Prostate gland (tissue), 2 donors: ENCODE measurements at regions of chr10 and their contacts with region 1.

Region 1: GRCh38 chr10:79929409-79929904 is 19.4 kb downstream of the SFTPD start:
- DNase-seq: peak; percentile 72
- H3K4me3 ChIP-seq: no peak overlapping the region
- H3K27ac ChIP-seq: no peak overlapping the region
- H3K4me1 ChIP-seq: peaks cover 5% of the 10 kb centered on the region
- H3K27me3 ChIP-seq: no peaks in the 10 kb centered on the region
- CTCF ChIP-seq: peak; percentile 75 to 91 (median 87)
- POLR2A ChIP-seq: no peak

Region 2: GRCh38 chr10:79562135-79562756 is 367.2 kb before region 1 on chr10:
- intact Hi-C with region 1: loop called (anchors 2 kb)
- DNase-seq: peak; percentile 60
- H3K4me3 ChIP-seq: no peak overlapping the region
- H3K27ac ChIP-seq: no peak overlapping the region
- H3K4me1 ChIP-seq: peaks cover 2% of the 10 kb centered on the region
- H3K27me3 ChIP-seq: no peaks in the 10 kb centered on the region
- CTCF ChIP-seq: peak; percentile 45 to 76 (median 58)
- POLR2A ChIP-seq: no peak

Region 3: GRCh38 chr10:80136081-80136571 is 206.7 kb after region 1 on chr10:
- intact Hi-C with region 1: no loop called
- DNase-seq: no peak
- H3K4me3 ChIP-seq: no peak overlapping the region
- H3K27ac ChIP-seq: no peak overlapping the region
- H3K4me1 ChIP-seq: no peaks in the 10 kb centered on the region
- H3K27me3 ChIP-seq: no peaks in the 10 kb centered on the region
- CTCF ChIP-seq: no peak
- POLR2A ChIP-seq: no peak